ENCODE measurements at regions of chrX and their contacts with region 1.

Region 1: DNA sequence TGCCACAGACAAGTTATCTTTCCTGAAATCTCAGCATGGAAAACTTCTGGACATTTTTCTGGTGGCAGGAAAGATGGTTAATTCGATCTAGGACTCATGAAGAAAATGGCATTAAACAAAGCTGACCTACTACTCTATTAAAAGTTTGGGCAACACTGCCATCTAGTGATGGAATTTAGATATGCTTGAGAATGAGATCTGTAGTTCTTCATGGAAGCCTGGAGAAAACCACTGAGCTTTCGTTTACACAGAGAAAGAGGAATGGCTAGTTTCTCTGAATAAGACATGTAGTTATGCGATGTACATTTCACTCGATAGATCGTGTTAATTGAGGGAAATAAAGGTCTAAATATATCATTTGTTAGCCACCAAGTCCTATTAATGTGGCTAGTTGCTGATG is 51.7 kb upstream of the CHRDL1 start:
- DNase-seq: no peak
- ATAC-seq: peak in 1 of 2 donors; percentile 69
- H3K4me3 ChIP-seq: no peak overlapping the region
- H3K27ac ChIP-seq: no peak overlapping the region
- H3K4me1 ChIP-seq: no peaks in the 10 kb centered on the region
- H3K27me3 ChIP-seq: no peaks in the 10 kb centered on the region

Region 2: DNA sequence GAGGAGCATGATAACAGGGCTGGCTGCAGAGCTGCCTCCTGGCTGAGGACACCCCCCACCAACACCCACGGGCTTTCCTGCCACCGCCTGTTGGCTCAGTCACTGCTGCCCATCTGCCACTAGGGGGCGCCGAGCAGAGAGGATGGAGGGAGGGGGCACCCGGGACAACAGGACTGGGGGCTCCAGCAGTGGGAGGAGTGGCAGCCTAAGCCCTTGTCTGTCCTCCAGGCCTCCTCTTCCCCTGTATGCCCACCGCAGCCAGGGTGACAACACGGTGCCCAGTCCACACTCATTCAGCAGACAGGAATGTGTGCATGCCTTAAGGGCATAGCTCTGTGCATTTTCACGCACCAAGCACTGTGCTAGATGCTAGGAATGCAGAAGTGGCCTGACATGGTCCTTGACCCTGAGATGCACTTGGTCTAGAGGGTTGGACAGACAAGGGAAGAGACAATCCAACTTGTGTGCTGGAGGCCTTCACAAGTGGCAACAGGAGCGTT is 679.3 kb before region 1 on chrX:
- intact Hi-C with region 1: loop called in 1 of 4 experiments (anchors 10 kb)
- DNase-seq: peak in 1 of 3 donors; percentile 60
- ATAC-seq: peak in 1 of 2 donors; percentile 48
- H3K4me3 ChIP-seq: no peak overlapping the region
- H3K27ac ChIP-seq: no peak overlapping the region
- H3K4me1 ChIP-seq: peaks cover 1% of the 10 kb centered on the region
- H3K27me3 ChIP-seq: no peaks in the 10 kb centered on the region

Region 3: GRCh38 chrX:110450050-110450449 is 397.3 kb before region 1 on chrX:
- intact Hi-C with region 1: loop called (anchors 2 to 5 kb)
- DNase-seq: peak; percentile 58 to 85 (median 78)
- ATAC-seq: peak; percentile 86 to 87
- H3K4me3 ChIP-seq: no peak overlapping the region
- H3K27ac ChIP-seq: no peak overlapping the region
- H3K4me1 ChIP-seq: no peaks in the 10 kb centered on the region
- H3K27me3 ChIP-seq: no peaks in the 10 kb centered on the region

Region 4: DNA sequence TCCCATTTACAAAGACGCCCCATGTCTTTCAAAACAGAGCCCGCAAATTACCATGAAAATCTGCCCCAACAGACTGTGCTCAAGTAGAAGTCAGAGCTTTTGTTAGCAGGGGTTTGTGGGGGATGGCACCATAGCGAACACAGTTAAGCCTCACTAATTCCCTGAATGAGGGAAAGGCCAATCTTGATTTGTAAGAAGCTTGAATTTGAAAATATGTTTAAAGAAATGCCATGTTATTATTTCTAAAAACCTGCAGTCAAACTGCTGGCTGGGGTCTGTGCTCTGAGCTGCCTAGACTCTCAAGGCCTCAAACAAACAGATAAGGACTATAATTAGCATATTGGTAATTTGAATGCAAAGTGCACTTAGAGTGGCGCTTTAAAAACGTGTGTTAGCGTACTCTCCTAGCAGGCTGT is 239.3 kb after region 1 on chrX:
- intact Hi-C with region 1: no loop called
- DNase-seq: no peak
- ATAC-seq: no peak
- H3K4me3 ChIP-seq: no peak overlapping the region
- H3K27ac ChIP-seq: no peak overlapping the region
- H3K4me1 ChIP-seq: no peaks in the 10 kb centered on the region
- H3K27me3 ChIP-seq: no peaks in the 10 kb centered on the region

Measured in right cardiac atrium (tissue), 5 donors.